Stomach (tissue), 19 donors: ENCODE measurements at regions of chr2 and their contacts with region 1.

Region 1: DNA sequence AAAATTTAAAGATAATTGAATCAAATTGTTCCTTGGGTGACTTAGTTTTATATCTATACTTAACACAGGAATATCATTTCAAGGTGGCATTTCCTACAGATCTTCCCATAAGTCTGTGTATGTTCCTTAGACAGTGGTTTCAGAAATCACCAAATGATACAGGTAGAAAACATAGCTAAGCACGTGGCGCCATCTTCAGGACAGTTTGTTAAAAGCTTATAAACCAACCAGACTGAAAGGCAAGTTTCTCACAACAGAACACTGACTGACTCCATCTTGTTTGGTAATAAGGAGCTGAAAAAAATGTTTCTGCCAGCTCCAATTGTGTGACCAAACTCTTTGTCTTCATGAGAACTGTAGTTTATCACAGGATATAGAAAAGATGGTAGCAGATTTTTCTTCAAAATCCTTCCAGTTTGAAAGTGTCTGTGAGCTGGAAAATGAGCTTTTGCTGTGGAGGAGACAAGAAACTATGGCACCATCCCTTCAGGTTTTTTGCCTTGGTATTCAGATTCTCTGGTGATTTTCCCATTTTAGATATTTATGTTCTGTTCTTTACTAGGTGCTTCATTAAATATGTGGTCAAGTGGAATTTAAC is 34.8 kb upstream of the NEUROD1 start:
- DNase-seq: peak; percentile 68 to 89
- H3K4me3 ChIP-seq: no peak overlapping the region
- H3K27ac ChIP-seq: no peak overlapping the region
- H3K4me1 ChIP-seq: no peaks in the 10 kb centered on the region
- H3K27me3 ChIP-seq: no peaks in the 10 kb centered on the region
- CTCF ChIP-seq: peak in 5 of 7 experiments; percentile 9 to 66 (median 49)
- EP300 ChIP-seq: no peak
- POLR2A ChIP-seq: no peak

Region 2: GRCh38 chr2:181573140-181573736 is 141.9 kb before region 1 on chr2:
- intact Hi-C with region 1: loop called (anchors 10 kb)
- DNase-seq: peak in 1 of 2 donors; percentile 63
- H3K4me3 ChIP-seq: no peak overlapping the region
- H3K27ac ChIP-seq: no peak overlapping the region
- H3K4me1 ChIP-seq: no peaks in the 10 kb centered on the region
- H3K27me3 ChIP-seq: no peaks in the 10 kb centered on the region
- CTCF ChIP-seq: peak in 3 of 7 experiments; percentile 16 to 47 (median 38)
- EP300 ChIP-seq: no peak
- POLR2A ChIP-seq: no peak

Region 3: DNA sequence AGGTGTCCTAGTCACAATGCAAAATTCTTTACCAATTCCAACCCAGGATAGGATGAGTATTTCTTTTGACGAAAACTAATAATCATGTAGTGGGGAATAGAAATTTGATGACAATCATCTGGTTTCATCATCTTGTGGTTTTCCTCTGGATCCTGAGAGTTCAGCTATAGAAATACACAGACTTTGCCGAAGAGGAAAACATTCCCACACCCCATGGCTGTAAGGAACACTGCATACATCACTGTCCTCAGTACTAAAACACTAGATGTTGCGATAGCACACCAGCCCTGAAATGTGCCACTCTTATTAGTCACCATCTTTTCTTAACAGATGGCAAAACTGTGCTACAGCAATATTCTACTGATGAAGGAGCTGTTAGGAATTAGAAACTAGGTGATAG is 87.6 kb before region 1 on chr2:
- intact Hi-C with region 1: no loop called
- DNase-seq: no peak
- H3K4me3 ChIP-seq: no peak overlapping the region
- H3K27ac ChIP-seq: no peak overlapping the region
- H3K4me1 ChIP-seq: no peaks in the 10 kb centered on the region
- H3K27me3 ChIP-seq: no peaks in the 10 kb centered on the region
- CTCF ChIP-seq: no peak
- EP300 ChIP-seq: no peak
- POLR2A ChIP-seq: no peak